ENCODE measurements at regions of chr3 and their contacts with region 1.

Region 1: GRCh38 chr3:156816800-156817645 is 9.1 kb upstream of the LEKR1 start:
- DNase-seq: peak; percentile 68 to 90 (median 81)
- ATAC-seq: peak; percentile 89
- H3K4me3 ChIP-seq: peak overlapping the region; percentile 64
- H3K4me3 Mint-ChIP-seq: peak overlapping the region; percentile 87 to 97 (median 95)
- H3K27ac ChIP-seq: peak overlapping the region; percentile 67
- H3K27ac Mint-ChIP-seq: peak overlapping the region; percentile 90 to 99 (median 96)
- H3K4me1 ChIP-seq: peaks cover 8 to 10% of the 10 kb centered on the region in 2 donors
- H3K4me1 Mint-ChIP-seq: peaks cover 6 to 72% (median 29%) of the 10 kb centered on the region in 7 donors
- H3K27me3 ChIP-seq: no peaks in the 10 kb centered on the region
- H3K27me3 Mint-ChIP-seq: no peaks in the 10 kb centered on the region

Region 2: DNA sequence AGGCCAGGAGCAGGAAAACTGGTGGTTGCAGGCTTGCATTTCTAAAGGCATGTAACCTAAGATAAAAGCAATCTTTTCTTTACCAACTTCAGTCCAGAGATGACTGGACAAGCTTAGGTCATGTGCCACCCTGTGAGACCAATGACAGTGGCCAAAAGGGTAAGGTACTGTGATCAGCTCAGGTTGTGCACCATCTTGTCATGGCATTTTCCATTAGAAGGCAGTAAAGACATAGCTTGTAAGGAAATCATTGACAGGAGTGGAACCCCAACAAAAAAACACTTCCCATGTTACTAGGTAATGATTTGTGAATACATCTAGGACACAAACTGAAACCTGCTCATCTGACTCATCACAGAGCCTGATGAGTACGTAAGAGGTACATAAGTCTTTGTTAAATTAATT is 297.3 kb before region 1 on chr3:
- CTCF ChIA-PET with region 1: no interaction called
- POLR2A ChIA-PET with region 1: no interaction called
- intact Hi-C with region 1: loop called in 1 of 2 experiments (anchors 5 kb)
- DNase-seq: no peak
- ATAC-seq: no peak
- H3K4me3 ChIP-seq: no peak overlapping the region
- H3K4me3 Mint-ChIP-seq: no peak overlapping the region
- H3K27ac ChIP-seq: no peak overlapping the region
- H3K27ac Mint-ChIP-seq: no peak overlapping the region
- H3K4me1 ChIP-seq: peaks cover 2 to 6% of the 10 kb centered on the region in 2 donors
- H3K4me1 Mint-ChIP-seq: peaks cover 6 to 26% (median 9%) of the 10 kb centered on the region in 7 donors
- H3K27me3 ChIP-seq: no peaks in the 10 kb centered on the region
- H3K27me3 Mint-ChIP-seq: peaks cover 13 to 84% (median 33%) of the 10 kb centered on the region in 5 donors

Region 3: DNA sequence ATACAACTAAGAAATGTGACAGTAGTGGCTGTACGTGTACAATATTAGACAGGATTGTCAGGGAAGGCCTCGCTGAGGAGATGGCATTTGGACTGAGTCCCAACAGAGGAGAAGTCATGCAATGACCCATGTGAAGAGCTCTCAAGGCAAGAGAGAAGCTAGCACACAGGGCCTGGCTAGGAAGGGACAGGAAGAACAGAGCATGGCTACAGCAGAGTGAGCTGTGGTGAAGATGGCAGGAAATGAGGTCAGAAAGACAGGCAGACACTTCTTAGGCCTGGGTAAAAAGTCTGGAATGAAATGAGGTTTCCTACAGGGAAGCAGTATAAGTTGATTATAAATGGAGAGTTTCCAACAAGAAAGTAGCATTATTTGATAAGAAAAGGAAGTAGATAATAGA is 24.1 kb before region 1 on chr3:
- CTCF ChIA-PET with region 1: interaction called, 3 read pairs
- POLR2A ChIA-PET with region 1: no interaction called
- intact Hi-C with region 1: loop called (anchors 2 kb)
- DNase-seq: no peak
- ATAC-seq: peak; percentile 47
- H3K4me3 ChIP-seq: no peak overlapping the region
- H3K4me3 Mint-ChIP-seq: peak overlapping the region in 1 of 10 donors; percentile 23
- H3K27ac ChIP-seq: no peak overlapping the region
- H3K27ac Mint-ChIP-seq: peak overlapping the region in 8 of 9 donors; percentile 1 to 75 (median 60)
- H3K4me1 ChIP-seq: peaks cover 0 to 5% of the 10 kb centered on the region in 2 donors
- H3K4me1 Mint-ChIP-seq: peaks cover 8 to 39% (median 20%) of the 10 kb centered on the region in 7 donors
- H3K27me3 ChIP-seq: no peaks in the 10 kb centered on the region
- H3K27me3 Mint-ChIP-seq: no peaks in the 10 kb centered on the region

Region 4: GRCh38 chr3:157081681-157082210 is 264.7 kb after region 1 on chr3:
- CTCF ChIA-PET with region 1: no interaction called
- POLR2A ChIA-PET with region 1: no interaction called
- intact Hi-C with region 1: loop called (anchors 2 kb)
- DNase-seq: peak; percentile 60 to 86 (median 70)
- ATAC-seq: peak; percentile 96
- H3K4me3 ChIP-seq: no peak overlapping the region
- H3K4me3 Mint-ChIP-seq: no peak overlapping the region
- H3K27ac ChIP-seq: no peak overlapping the region
- H3K27ac Mint-ChIP-seq: peak overlapping the region in 8 of 9 donors; percentile 9 to 79 (median 56)
- H3K4me1 ChIP-seq: peaks cover 0 to 12% of the 10 kb centered on the region in 2 donors
- H3K4me1 Mint-ChIP-seq: peaks cover 0 to 54% (median 6%) of the 10 kb centered on the region in 7 donors
- H3K27me3 ChIP-seq: no peaks in the 10 kb centered on the region
- H3K27me3 Mint-ChIP-seq: no peaks in the 10 kb centered on the region